PC-3 (cell line): ENCODE measurements at regions of chr4 and their contacts with region 1.

Region 1: GRCh38 chr4:2630556-2631273 is 94.3 kb downstream of the FAM193A start:
- DNase-seq: no peak
- ATAC-seq: no peak
- H3K4me3 ChIP-seq: no peak overlapping the region
- H3K27ac ChIP-seq: no peak overlapping the region
- H3K4me1 ChIP-seq: no peaks in the 10 kb centered on the region
- H3K27me3 ChIP-seq: no peaks in the 10 kb centered on the region
- CTCF ChIP-seq: no peak

Region 2: GRCh38 chr4:2583517-2583916 is 47.2 kb before region 1 on chr4:
- CTCF ChIA-PET with region 1: no interaction called
- POLR2A ChIA-PET with region 1: no interaction called
- intact Hi-C with region 1: loop called (anchors 10 kb)
- DNase-seq: peak; percentile 75
- ATAC-seq: peak; percentile 98
- H3K4me3 ChIP-seq: no peak overlapping the region
- H3K27ac ChIP-seq: 0 out of 2 replicates have a peak overlapping the region, but pooled peaks have one; percentile 31
- H3K4me1 ChIP-seq: peaks cover 24% of the 10 kb centered on the region
- H3K27me3 ChIP-seq: no peaks in the 10 kb centered on the region
- CTCF ChIP-seq: no peak